Activated B cell treated with CpG ODN at 0.5 μM for 24 hours (primary cell): ENCODE measurements at regions of chr17 and their contacts with region 1.

Region 1: GRCh38 chr17:16537130-16537458 is 31.9 kb downstream of the ZNF287 start:
- DNase-seq: no peak
- ATAC-seq: no peak
- H3K4me3 Mint-ChIP-seq: peak overlapping the region; percentile 98
- H3K27ac Mint-ChIP-seq: peak overlapping the region; percentile 99
- H3K4me1 Mint-ChIP-seq: peaks cover 21% of the 10 kb centered on the region
- H3K27me3 Mint-ChIP-seq: no peaks in the 10 kb centered on the region
- CTCF ChIP-seq: no peak

Region 2: GRCh38 chr17:16285957-16286640 is 251.0 kb before region 1 on chr17:
- CTCF ChIA-PET with region 1: no interaction called
- POLR2A ChIA-PET with region 1: interaction called, 13 read pairs
- intact Hi-C with region 1: no loop called
- DNase-seq: peak; percentile 41
- ATAC-seq: peak; percentile 74
- H3K4me3 Mint-ChIP-seq: peak overlapping the region; percentile 82
- H3K27ac Mint-ChIP-seq: peak overlapping the region; percentile 99
- H3K4me1 Mint-ChIP-seq: peaks cover 64% of the 10 kb centered on the region
- H3K27me3 Mint-ChIP-seq: no peaks in the 10 kb centered on the region
- CTCF ChIP-seq: no peak

Region 3: GRCh38 chr17:16415031-16415924 is 121.8 kb before region 1 on chr17 and contains the start of gene TRPV2:
- CTCF ChIA-PET with region 1: no interaction called
- POLR2A ChIA-PET with region 1: interaction called, 14 read pairs
- intact Hi-C with region 1: loop called (anchors 2 kb)
- DNase-seq: peak; percentile 51
- ATAC-seq: peak; percentile 41
- H3K4me3 Mint-ChIP-seq: peak within 1 kb of the TSS; percentile 95
- H3K27ac Mint-ChIP-seq: peak within 1 kb of the TSS; percentile 97
- H3K4me1 Mint-ChIP-seq: peaks cover 41% of the 10 kb centered on the region
- H3K27me3 Mint-ChIP-seq: no peaks in the 10 kb centered on the region
- CTCF ChIP-seq: no peak
- total RNA-seq, gene TRPV2: 58.3 and 65.8 TPM in 2 replicates

Region 4: DNA sequence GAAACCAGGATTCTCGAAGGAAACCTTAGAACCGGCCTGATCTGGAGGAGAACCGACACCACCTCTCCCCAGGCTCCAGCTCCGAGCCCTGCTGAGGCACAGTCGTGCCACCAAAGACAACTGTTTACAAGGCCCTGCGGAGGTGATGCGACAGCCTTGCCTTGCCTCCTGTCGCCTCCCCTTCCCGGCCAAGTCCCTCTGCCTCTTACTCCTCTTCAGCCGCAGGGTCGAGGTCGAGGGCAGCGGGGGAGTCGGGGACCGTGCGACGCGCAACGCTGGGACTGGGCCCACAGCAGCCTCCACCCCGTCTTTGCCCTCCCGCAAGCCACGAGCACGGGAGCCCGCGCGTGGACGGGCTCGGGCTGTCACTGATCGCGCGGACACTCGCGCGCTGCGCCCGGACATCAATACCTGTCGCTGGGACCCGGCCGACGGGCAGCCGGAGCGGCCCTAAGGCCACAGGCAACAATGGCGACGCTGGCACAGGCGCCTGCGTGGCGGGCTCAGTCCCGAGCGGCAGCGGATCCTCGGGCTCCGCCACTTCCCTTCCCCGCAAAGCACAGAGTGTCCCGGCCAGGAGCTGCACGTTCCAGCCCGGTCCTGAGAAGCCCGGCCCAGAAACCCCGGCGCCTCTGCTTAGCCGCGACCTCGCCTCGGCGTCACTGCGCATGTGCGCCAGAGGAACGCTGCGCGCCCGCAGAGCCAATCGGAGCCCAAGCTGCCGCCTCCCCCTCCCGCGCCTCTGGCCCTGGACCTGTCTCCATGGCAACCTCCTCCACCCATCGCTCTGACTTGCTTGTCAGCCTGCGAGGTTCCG is 31.7 kb after region 1 on chr17 and contains the start of gene ZNF287:
- CTCF ChIA-PET with region 1: interaction called, 5 read pairs
- POLR2A ChIA-PET with region 1: interaction called, 26 read pairs
- intact Hi-C with region 1: loop called (anchors 1 kb)
- DNase-seq: peak; percentile 89
- ATAC-seq: peak; percentile 97
- H3K4me3 Mint-ChIP-seq: peak within 1 kb of the TSS; percentile 88
- H3K27ac Mint-ChIP-seq: peak within 1 kb of the TSS; percentile 94
- H3K4me1 Mint-ChIP-seq: peaks cover 14% of the 10 kb centered on the region
- H3K27me3 Mint-ChIP-seq: no peaks in the 10 kb centered on the region
- CTCF ChIP-seq: no peak
- total RNA-seq, gene ZNF287: 14.3 and 15.4 TPM in 2 replicates

Region 5: DNA sequence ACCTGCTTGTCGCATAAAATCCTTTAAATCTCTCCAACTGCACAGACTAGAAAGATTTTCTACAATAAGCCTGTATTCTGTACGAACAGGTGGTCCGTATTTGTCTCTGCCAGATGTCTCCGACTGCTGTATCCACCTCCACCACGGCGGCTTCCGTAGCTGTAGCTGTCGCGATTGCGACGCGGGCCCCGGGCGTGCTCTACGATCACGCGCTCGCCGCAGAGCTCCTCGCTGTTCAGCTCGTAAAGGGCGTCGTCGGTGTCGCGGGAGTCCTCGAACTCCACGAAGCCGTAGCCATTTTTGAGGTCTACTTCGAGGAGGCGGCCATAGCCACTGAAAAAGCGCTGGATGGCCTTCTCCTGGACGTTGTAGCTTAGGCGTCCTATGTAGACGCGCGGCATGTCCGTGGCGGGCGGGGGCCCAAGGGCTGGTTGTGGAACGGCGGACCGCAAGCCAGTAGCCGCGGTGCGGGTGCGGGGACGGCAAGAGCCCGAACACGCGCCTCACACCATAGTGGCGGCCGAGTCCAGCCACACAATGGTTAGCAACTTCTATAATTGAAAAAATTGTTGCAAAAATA is 80.5 kb after region 1 on chr17:
- CTCF ChIA-PET with region 1: no interaction called
- POLR2A ChIA-PET with region 1: no interaction called
- intact Hi-C with region 1: no loop called
- DNase-seq: no peak
- ATAC-seq: no peak
- H3K4me3 Mint-ChIP-seq: no peak overlapping the region
- H3K27ac Mint-ChIP-seq: no peak overlapping the region
- H3K4me1 Mint-ChIP-seq: no peaks in the 10 kb centered on the region
- H3K27me3 Mint-ChIP-seq: no peaks in the 10 kb centered on the region
- CTCF ChIP-seq: no peak

Region 6: DNA sequence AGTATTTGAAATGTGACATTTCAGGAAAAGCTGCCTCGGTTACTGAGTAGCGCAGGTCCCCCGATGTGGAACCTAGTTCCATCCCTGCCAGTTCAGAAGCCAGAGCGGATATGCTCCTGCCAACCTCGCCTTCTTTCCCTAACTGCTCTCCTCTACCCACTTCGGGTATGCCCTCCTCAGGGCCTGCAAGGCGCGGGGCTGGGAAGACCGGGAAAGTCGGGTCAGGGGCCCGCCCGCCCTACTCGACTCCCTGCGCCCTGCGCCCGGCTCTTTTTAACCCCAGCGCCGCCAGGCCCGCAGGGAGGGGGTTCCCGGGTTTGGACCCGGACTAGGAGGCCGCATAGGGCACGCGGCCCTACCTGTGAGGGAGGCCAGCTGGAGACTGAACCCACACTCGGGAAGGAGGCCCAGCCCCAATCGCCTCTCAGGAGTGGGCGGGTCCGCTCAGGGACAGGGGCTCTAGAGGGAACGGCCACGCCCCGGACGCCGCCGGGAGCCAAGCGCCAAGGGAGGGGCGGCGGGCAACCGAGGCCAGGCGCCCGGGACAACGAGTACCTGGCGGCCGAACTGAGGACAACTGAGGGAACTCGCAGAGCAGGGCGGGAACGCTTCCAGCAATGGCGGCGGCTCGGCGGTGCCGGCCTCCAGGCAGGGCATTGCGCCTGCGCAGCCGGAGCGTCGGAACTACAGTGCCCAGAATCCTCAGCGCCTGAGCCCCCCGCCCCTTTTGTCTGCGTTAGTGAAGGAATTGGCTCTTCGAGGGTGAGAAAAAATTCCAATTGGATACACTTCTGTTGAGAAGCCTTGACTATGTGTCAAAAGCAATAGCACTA is 116.3 kb after region 1 on chr17 and contains the start of gene ZNF624:
- CTCF ChIA-PET with region 1: no interaction called
- POLR2A ChIA-PET with region 1: interaction called, 6 read pairs
- intact Hi-C with region 1: loop called (anchors 1 kb)
- DNase-seq: peak; percentile 82
- ATAC-seq: peak; percentile 96
- H3K4me3 Mint-ChIP-seq: peak within 1 kb of the TSS; percentile 88
- H3K27ac Mint-ChIP-seq: peak within 1 kb of the TSS; percentile 37
- H3K4me1 Mint-ChIP-seq: peaks cover 17% of the 10 kb centered on the region
- H3K27me3 Mint-ChIP-seq: no peaks in the 10 kb centered on the region
- CTCF ChIP-seq: no peak
- total RNA-seq, gene ZNF624: 6.3 and 6.9 TPM in 2 replicates

Region 7: DNA sequence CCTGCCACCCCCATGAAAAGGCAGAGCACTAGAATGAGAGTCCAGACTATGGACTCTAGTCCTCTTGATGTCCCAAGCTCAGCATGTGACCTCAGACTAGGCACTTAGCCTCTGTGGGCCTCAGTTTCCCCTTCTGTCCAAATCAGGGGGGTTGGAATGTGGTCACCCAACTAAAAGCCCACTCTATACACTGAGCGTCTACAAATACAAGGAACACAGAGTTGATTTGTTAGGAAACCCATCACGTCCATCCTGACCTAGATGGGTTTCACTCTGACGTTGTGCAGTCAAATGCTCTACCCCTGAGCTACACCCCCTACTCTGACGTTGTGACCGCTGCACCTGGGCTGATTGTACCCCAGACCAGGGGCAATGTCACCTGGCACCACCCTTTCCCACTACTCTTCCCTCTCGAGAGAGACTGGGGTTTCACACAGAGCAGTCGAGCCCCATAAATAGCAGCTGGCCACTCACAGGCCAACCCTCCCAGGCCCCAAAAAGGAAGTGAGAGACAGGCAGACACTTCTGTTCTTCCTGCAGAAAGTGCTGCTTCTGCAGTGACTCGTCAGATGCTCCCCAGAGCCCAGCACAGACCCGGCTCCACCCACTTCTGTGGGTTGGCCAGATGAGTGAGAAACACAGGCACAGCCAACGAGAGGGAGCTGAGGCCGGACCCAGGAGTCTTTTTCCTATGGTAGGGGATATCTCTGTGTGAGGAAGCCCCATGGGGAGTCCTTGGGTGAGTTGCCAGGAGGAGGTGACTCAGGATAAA is 450.9 kb after region 1 on chr17:
- CTCF ChIA-PET with region 1: no interaction called
- POLR2A ChIA-PET with region 1: interaction called, 4 read pairs
- intact Hi-C with region 1: loop called (anchors 1 kb)
- DNase-seq: peak; percentile 78
- ATAC-seq: peak; percentile 80
- H3K4me3 Mint-ChIP-seq: peak overlapping the region; percentile 84
- H3K27ac Mint-ChIP-seq: peak overlapping the region; percentile 97
- H3K4me1 Mint-ChIP-seq: peaks cover 78% of the 10 kb centered on the region
- H3K27me3 Mint-ChIP-seq: no peaks in the 10 kb centered on the region
- CTCF ChIP-seq: no peak